ENCODE measurements at regions of chr1 and their contacts with region 1.

Region 1: GRCh38 chr1:223500560-223501425 is 107.6 kb downstream of the CCDC185 start:
- DNase-seq: no peak
- ATAC-seq: peak; percentile 61; the same call in 1 of the 2 replicates
- H3K4me3 ChIP-seq: no peak overlapping the region
- H3K27ac ChIP-seq: no peak overlapping the region
- H3K4me1 ChIP-seq: no peaks in the 10 kb centered on the region; the same call in 1 of the 2 replicates
- H3K27me3 ChIP-seq: no peaks in the 10 kb centered on the region
- CTCF ChIP-seq: no peak

Region 2: GRCh38 chr1:223513191-223513708 is 12.5 kb after region 1 on chr1:
- CTCF ChIA-PET with region 1: no interaction called
- POLR2A ChIA-PET with region 1: no interaction called
- in situ Hi-C with region 1: no loop called
- intact Hi-C with region 1: loop called (anchors 1 kb)
- DNase-seq: no peak
- ATAC-seq: no peak
- H3K4me3 ChIP-seq: no peak overlapping the region
- H3K27ac ChIP-seq: no peak overlapping the region
- H3K4me1 ChIP-seq: no peaks in the 10 kb centered on the region
- H3K27me3 ChIP-seq: peaks cover 7% of the 10 kb centered on the region
- CTCF ChIP-seq: no peak

Measured in Panc1 (cell line).